AG04449 (cell line): ENCODE measurements at regions of chr15 and their contacts with region 1.

Region 1: DNA sequence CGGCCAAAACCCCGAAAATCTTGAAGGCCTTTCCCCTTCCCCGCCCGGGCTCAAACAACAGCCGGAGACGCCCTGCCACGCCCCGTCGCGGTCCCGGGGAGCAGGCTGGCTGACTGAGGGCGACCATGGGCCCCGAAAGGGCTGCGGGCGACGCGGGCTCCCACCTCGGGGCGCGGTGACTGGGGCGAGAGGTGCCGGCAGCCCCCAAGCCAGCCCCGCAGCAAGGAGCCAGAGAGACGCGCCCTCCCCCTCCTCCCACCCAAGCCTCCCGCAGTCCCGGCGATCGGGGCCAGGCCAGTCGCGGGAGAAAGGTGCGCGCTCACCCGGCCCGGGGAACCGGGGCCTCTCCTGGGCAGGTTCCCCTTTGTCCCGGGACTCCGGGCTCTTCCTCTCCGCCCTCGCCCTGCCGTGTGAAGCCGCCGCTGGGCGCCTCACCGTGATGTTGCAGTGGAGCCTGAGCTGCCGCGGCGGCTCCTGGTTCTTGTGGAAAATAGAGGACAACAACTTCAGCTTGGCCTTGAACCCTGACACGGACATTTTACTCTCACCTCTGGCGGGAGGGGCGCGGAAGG is 30.6 kb upstream of the ZSCAN2 start:
- DNase-seq: no peak
- H3K4me3 ChIP-seq: peak overlapping the region; percentile 73
- CTCF ChIP-seq: no peak

Region 2: GRCh38 chr15:84582583-84583157 is 12.4 kb after region 1 on chr15:
- CTCF ChIA-PET with region 1: interaction called, 32 read pairs
- POLR2A ChIA-PET with region 1: no interaction called
- DNase-seq: no peak
- H3K4me3 ChIP-seq: no peak overlapping the region
- CTCF ChIP-seq: no peak

Region 3: DNA sequence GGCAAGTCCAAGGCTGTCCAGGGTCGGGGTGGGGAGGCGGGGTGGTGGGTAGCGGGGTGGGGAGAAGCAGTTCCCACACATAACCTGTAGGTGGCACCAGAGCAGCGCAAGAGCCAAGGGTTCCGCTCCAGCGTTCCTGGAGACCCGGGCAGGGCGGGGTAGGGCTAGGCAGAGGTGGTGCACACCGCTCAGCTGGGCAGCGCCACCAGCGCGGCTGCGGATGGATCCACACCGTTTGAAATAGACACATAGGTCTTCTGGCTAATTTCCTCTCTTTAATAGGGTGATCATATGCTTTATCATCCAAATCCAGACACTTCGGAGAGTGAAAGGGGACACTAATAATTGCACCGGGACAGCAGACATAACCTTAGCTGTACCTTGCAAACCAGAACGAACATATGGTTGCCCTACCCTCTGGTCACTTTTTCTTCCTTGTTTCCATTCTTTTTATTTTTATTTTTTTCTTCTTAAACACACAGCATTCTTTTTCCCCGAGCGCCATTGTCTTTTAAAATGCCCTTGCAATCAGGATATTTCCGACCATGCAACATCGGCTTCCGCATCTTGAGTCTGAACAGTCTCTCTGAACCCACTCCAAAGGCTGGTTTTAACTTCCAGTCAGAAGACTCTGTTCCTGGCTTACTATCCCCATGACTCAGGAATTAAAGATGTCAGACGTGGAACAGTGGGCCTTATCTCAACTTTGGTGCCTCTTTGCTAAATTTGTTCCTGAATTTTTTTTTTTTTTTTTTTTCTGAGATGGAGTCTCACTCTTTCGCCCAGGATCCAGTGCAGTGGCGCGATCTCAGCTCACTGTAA is 18.0 kb after region 1 on chr15:
- CTCF ChIA-PET with region 1: interaction called, 32 read pairs
- POLR2A ChIA-PET with region 1: no interaction called
- DNase-seq: no peak
- H3K4me3 ChIP-seq: peak overlapping the region; percentile 44
- CTCF ChIP-seq: peak; percentile 82